Calu3 (cell line): ENCODE measurements at regions of chr14 and their contacts with region 1.

Region 1: DNA sequence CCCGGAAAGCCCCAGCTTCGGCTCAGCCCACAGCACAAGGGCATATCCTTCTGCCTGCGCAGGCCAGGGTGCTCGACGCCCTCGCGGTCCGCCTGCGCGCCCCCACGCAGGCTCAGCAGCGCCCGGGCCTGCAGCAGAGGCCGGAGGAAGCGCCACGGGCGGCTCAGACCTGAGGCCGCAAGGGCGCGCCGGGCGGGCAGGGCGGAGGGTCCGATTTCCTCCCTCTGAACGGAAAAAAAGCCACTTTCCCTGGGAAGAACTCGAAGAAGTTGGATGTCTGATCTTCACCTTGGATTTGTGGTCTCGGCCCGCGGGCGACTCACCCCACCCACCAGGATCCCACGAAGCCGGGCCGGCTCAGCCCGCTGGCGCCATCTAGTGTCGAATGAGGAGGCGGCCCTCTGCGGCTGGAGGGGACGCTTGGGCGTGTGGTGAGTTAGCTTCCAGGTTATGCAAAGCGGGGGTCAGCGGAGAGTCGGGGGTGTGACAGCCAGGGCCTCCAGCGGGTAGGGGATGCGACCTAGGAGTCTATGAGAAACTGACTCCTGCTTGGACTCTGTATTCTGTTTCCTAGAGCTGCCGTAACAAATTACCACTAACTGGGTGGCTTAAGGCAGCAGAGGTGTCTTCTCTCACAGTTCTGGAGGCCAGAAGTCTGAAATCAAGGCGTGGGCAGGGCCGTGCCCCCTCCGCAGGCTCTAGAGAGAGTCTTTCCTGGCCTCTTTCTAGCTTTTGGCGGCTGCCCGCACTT is 40.0 kb upstream of the SRSF5 start:
- DNase-seq: peak; percentile 83
- H3K4me3 Mint-ChIP-seq: peak overlapping the region; percentile 65
- H3K27ac Mint-ChIP-seq: no peak overlapping the region
- H3K4me1 Mint-ChIP-seq: peaks cover 14% of the 10 kb centered on the region
- H3K27me3 Mint-ChIP-seq: peaks cover 15% of the 10 kb centered on the region
- CTCF ChIP-seq: peak; percentile 94

Region 2: GRCh38 chr14:69580009-69580577 is 146.8 kb before region 1 on chr14:
- CTCF ChIA-PET with region 1: interaction called, 7 read pairs
- intact Hi-C with region 1: loop called (anchors 1 kb)
- DNase-seq: peak; percentile 66
- H3K4me3 Mint-ChIP-seq: no peak overlapping the region
- H3K27ac Mint-ChIP-seq: no peak overlapping the region
- H3K4me1 Mint-ChIP-seq: peaks cover 8% of the 10 kb centered on the region
- H3K27me3 Mint-ChIP-seq: peaks cover 19% of the 10 kb centered on the region
- CTCF ChIP-seq: peak; percentile 38

Region 3: DNA sequence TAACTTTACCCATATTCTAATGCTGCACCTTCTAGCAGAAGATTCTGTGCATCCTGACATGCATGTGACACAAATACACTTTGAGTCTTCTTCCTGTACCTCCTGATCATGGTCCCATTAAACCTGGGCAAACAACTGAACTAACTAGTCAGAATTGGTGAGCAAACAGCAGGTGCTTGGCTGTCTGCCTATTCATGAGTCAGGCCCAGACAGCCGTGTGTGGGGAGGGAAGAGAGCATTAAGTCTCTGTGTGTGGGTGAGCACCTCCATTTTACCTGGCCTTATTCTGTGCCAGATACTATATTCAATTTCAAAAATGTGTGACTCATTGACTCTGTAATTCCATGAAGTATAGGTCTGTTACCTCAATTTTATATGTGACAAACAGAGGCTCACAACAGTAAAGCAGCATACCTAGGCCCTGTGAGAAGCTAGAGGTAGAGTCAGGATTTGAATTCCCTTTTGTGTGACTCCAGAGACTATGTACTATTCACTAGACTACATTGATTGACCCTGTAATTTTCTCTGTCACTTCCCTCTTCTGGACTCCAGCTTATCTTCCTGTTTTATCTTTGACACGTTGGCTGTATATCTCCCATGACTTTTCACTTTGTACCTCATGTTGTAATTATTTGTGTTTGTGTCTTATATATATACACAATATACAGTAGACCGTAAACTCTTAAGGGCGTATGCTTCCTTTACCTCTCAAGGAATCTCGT is 83.3 kb before region 1 on chr14:
- CTCF ChIA-PET with region 1: no interaction called
- intact Hi-C with region 1: no loop called
- DNase-seq: peak; percentile 88
- H3K4me3 Mint-ChIP-seq: peak overlapping the region; percentile 54
- H3K27ac Mint-ChIP-seq: peak overlapping the region; percentile 99
- H3K4me1 Mint-ChIP-seq: peaks cover 54% of the 10 kb centered on the region
- H3K27me3 Mint-ChIP-seq: no peaks in the 10 kb centered on the region
- CTCF ChIP-seq: no peak

Region 4: DNA sequence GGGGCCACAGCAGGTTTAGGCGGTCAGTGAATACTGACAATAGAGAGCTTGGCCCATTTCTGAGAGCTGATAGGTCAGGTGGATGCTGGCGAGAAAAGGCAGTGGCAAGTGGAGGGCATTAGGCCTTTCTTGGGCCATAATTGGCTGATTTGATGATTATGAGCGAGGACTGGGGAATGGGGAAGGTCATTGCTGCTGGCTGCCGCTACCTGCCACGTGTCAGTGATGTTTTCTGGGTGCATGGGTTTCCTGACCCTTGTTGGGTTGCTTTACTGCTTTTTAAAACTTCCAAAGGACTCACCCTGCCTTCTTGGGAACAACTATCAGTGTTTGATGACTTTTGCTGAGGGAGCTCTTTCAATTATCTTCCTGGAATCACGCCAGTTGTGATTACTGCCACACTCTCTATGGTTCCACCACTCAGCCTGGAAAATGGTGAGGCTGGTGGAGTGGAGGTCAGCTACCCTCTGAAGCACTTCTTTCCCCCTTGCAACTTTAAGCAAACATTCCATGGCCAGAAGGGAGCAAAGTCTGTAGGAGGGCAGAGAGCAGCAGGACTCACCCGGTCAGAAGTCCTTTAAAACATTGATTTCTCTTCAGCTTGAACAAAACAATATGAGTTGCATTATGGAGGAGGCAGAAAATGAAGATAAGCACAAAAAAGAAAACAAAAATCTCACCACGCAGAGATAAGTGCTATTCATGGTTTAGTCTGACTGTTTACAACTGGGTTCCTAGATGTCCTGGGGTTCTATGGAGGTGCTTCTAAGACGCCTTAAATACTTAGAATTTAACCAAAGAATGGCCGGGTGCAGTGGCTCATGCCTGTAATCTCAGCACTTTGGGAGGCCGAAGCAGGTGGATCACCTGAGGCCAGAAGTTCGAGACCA is 82.2 kb after region 1 on chr14:
- CTCF ChIA-PET with region 1: interaction called, 3 read pairs
- intact Hi-C with region 1: loop called (anchors 5 kb)
- DNase-seq: no peak
- H3K4me3 Mint-ChIP-seq: no peak overlapping the region
- H3K27ac Mint-ChIP-seq: no peak overlapping the region
- H3K4me1 Mint-ChIP-seq: no peaks in the 10 kb centered on the region
- H3K27me3 Mint-ChIP-seq: no peaks in the 10 kb centered on the region
- CTCF ChIP-seq: no peak